Activated T-helper 2 cell treated with anti-CD3 and anti-CD28 coated beads, Interferon-gamma antibody, Interleukin-2, Interleukin-4, amounts not matched to agents 10 μg/mL and 5 μg/mL and 100 μg/mL, durations not matched to agents 14 hours and 24 hours and 36 hours (primary cell): ENCODE measurements at regions of chrX and their contacts with region 1.

Region 1: GRCh38 chrX:123960042-123960611 is 1.4 kb upstream of the STAG2 start:
- DNase-seq: peak; percentile 84
- H3K4me3 Mint-ChIP-seq: peak overlapping the region; percentile 99
- H3K27ac Mint-ChIP-seq: peak overlapping the region; percentile 100
- H3K4me1 Mint-ChIP-seq: peaks cover 15% of the 10 kb centered on the region
- H3K27me3 Mint-ChIP-seq: no peaks in the 10 kb centered on the region

Region 2: GRCh38 chrX:123779908-123780396 is 180.2 kb before region 1 on chrX:
- intact Hi-C with region 1: no loop called
- DNase-seq: no peak
- H3K4me3 Mint-ChIP-seq: no peak overlapping the region
- H3K27ac Mint-ChIP-seq: no peak overlapping the region
- H3K4me1 Mint-ChIP-seq: no peaks in the 10 kb centered on the region
- H3K27me3 Mint-ChIP-seq: no peaks in the 10 kb centered on the region

Region 3: DNA sequence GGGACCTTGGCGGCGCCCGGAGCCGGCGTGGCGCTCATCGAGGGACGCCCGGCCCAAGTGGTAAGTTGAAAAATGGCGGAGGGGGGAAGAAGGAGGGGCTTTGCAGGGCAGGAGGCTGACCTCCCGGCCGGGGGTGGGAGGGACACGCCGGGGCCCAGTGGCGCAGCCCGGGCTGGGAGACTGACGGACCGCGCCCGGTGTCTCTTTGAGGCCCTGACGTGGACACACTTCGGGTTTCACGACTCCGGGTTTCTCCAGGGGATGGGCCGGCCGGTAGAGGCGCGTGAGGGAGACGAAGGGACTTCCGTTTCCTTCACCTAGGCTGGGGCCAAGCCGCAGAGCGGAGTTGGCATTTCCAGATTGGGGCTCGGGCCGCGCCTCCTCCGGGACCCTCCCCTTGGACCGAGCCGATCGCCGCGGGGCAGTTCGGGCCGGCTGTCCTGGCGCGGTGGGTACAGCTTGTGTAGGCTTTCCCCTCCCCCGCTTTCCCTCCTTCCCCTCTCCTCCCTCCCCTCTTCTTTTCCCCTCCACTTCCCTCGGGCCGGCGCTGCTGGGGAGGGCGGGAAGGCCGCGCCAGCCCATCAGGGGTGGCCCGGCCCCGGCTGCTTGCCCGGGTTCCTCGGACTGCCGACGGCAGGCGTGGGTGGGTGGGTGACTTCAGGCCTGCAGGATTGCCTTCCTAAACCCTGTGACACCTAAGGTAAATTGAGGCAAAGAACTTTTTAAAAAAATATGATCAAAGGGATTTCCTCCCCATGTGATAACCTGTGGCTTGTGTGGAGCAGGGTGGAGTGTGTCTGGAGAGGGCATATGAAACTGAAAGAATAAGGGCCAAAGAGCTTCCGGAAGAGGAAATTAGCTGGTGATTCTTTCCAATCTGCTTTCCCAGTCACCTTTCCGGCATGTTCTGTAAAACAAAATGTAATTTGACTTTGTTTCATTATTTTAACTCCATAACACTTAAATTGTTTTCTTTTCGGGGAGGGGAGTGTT is 100.0 kb before region 1 on chrX and contains the start of gene XIAP:
- intact Hi-C with region 1: loop called (anchors 1 kb)
- DNase-seq: peak; percentile 63
- H3K4me3 Mint-ChIP-seq: peak within 1 kb of the TSS; percentile 84
- H3K27ac Mint-ChIP-seq: peak within 1 kb of the TSS; percentile 84
- H3K4me1 Mint-ChIP-seq: peaks cover 9% of the 10 kb centered on the region
- H3K27me3 Mint-ChIP-seq: no peaks in the 10 kb centered on the region
- total RNA-seq, gene XIAP: 32.7 and 33.4 TPM in 2 replicates

Region 4: GRCh38 chrX:123976706-123977316 is 16.7 kb after region 1 on chrX:
- intact Hi-C with region 1: loop called (anchors 1 kb)
- DNase-seq: no peak
- H3K4me3 Mint-ChIP-seq: no peak overlapping the region
- H3K27ac Mint-ChIP-seq: no peak overlapping the region
- H3K4me1 Mint-ChIP-seq: peaks cover 22% of the 10 kb centered on the region
- H3K27me3 Mint-ChIP-seq: no peaks in the 10 kb centered on the region

Region 5: GRCh38 chrX:124086411-124086810 is 126.3 kb after region 1 on chrX:
- intact Hi-C with region 1: loop called (anchors 2 kb)
- DNase-seq: peak; percentile 29
- H3K4me3 Mint-ChIP-seq: no peak overlapping the region
- H3K27ac Mint-ChIP-seq: peak overlapping the region; percentile 62
- H3K4me1 Mint-ChIP-seq: peaks cover 21% of the 10 kb centered on the region
- H3K27me3 Mint-ChIP-seq: no peaks in the 10 kb centered on the region

Region 6: GRCh38 chrX:124239911-124240310 is 279.8 kb after region 1 on chrX:
- intact Hi-C with region 1: loop called (anchors 2 kb)
- DNase-seq: peak; percentile 38
- H3K4me3 Mint-ChIP-seq: peak overlapping the region; percentile 58
- H3K27ac Mint-ChIP-seq: peak overlapping the region; percentile 73
- H3K4me1 Mint-ChIP-seq: peaks cover 32% of the 10 kb centered on the region
- H3K27me3 Mint-ChIP-seq: no peaks in the 10 kb centered on the region

Region 7: DNA sequence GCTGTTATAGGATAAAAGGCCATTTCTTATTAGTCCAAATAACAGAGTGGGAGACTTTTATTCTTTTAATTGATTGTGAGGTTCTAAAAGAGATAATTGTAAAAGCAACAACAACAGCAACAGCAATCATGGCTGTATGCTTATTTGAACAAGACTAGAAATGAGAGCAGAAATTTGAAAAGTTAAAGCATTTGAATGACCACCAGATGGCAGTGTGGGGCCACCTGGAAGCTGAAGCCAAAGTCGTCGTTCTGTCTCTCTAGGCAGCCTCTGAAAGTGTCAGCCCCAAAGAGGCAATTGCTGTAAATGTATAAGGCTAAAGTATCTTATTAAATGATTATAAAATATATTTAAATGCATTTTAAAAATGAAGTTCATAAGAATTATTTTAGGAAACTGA is 428.4 kb after region 1 on chrX:
- intact Hi-C with region 1: loop called (anchors 10 kb)
- DNase-seq: peak; percentile 13
- H3K4me3 Mint-ChIP-seq: no peak overlapping the region
- H3K27ac Mint-ChIP-seq: no peak overlapping the region
- H3K4me1 Mint-ChIP-seq: peaks cover 38% of the 10 kb centered on the region
- H3K27me3 Mint-ChIP-seq: no peaks in the 10 kb centered on the region